Left ventricle myocardium inferior (tissue), 1 donor: ENCODE measurements at regions of chr19 and their contacts with region 1.

Region 1: DNA sequence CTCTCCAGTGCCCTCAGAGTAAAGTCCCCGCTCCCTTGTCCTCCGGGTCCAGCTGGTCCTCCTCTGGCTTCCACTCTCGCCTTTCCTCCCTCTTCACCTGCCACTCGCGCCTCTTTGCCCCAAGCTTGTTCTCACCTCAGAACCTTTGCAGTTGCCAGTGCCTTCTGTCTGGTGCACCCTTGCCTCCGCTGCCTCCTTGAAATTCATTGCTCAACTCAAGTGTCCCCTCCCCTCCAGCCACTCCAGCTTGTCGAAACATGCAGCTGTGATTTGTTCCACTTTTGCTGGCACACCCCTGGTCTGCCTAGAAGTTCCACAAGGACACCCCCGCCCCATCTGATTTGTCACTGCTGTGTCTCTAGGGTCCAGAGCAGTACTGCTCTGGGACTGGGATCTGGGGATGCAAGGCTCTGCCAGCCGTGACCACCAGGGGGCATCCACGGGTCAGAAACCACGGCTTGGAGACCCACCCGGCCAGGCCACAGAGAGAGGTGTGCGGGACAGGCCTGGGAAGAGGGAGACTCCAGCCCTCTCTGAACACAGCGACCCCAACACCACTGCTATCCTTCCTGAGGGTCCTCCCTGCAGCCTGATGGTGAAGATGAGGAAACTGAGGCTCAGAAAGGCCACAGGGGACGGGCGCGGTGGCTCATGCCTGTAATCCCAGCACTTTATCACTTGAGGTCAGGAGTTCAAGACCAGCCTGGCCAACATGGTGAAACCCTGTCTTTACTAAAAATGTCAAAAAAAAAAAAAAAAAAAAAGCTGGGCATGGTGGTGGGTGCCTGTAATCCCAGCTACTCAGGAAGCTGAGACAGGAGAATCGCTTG is 49.9 kb downstream of the AP1M1 start:
- DNase-seq: peak; percentile 90
- H3K4me3 ChIP-seq: no peak overlapping the region
- H3K27ac ChIP-seq: peak overlapping the region; percentile 60
- H3K4me1 ChIP-seq: no peaks in the 10 kb centered on the region
- H3K27me3 ChIP-seq: no peaks in the 10 kb centered on the region
- CTCF ChIP-seq: peak; percentile 96

Region 2: DNA sequence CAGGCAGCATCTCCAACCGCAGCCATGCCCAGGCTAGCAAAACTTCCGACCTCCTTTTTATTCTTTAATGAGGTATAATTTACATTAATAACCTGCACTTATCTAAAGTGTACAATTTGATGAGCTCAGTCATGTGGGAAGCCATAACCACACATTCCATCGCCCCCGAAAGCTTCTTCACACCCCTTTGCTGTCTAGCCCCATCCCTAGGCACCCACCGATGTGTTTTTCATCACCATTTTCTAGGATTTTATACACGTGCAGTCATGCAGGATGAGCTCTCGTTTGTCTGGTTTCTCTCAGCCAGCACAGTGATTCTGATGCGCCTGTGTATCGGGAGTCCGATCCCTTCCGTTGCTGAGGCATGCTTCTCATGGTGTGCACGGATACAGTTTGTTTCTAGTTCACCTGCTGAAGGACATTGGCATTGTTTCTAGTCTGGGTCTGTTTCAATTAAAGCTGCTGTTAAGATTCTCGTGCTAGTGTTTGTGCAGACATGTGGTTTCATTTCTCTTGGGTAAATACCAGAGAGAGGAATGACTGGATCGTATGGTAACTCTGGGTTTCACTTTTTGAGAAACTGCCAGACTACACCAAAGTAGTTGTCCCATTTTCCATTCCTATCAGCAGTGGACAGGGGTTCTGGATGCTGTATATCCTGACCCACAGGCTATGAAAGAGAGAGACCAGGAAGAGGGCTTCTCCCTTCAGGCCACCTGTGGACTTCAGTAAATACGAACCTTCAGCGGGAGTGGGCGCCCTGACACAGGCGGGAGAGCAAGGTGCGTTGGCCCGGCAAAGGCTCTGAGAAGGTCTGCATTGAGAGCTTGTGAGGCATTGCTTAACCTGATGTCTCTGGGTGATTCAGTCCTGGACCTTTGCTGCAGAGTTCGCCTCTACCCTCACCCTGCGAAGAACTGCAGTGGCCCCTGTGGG is 45.0 kb before region 1 on chr19:
- intact Hi-C with region 1: no loop called
- DNase-seq: no peak
- H3K4me3 ChIP-seq: no peak overlapping the region
- H3K27ac ChIP-seq: no peak overlapping the region
- H3K4me1 ChIP-seq: peaks cover 57% of the 10 kb centered on the region
- H3K27me3 ChIP-seq: no peaks in the 10 kb centered on the region
- CTCF ChIP-seq: no peak

Region 3: DNA sequence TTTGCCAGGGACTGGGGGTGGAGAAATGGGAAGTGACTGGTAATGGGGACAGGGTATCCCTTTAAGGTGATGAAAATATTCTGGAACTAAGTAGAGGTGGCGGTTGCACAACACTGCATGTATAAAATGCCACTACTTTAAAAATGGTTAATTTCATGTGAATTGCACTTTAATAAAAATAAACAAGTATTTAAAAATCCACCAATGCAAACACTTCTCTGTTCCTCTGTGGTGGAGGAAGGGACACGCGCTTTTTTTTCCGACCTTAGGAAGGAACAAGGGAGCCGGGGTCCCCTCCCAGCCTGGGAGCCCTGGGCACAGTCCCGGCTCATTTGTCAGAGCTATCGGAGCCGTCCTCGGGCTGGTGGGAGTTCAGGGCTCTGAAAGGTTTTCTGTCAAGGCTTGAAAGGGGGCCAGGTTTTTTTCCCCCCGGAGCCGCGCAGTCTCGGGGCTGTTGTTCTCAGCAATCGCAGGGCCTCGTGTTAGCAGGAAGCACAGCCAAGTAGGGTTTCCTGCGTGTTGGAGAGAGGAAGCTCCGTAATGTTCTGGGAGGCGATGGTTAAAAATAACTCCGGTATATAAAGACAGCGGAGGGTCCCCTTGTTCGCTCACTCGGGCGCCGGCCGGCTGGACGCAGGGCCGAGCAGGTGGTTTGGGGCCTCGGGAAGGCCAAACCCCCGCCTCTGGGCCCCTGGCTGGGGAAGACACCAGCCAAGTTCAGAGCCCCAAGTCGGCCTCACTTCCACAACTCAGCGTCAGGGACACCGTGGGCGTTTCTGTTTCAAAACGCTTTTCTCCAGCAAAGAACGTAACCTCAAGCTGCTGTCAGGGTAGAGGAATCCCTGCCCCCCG is 35.9 kb after region 1 on chr19:
- intact Hi-C with region 1: no loop called
- DNase-seq: peak; percentile 84
- H3K4me3 ChIP-seq: peak overlapping the region; percentile 56
- H3K27ac ChIP-seq: peak overlapping the region; percentile 96
- H3K4me1 ChIP-seq: peaks cover 69% of the 10 kb centered on the region
- H3K27me3 ChIP-seq: no peaks in the 10 kb centered on the region
- CTCF ChIP-seq: no peak

Region 4: DNA sequence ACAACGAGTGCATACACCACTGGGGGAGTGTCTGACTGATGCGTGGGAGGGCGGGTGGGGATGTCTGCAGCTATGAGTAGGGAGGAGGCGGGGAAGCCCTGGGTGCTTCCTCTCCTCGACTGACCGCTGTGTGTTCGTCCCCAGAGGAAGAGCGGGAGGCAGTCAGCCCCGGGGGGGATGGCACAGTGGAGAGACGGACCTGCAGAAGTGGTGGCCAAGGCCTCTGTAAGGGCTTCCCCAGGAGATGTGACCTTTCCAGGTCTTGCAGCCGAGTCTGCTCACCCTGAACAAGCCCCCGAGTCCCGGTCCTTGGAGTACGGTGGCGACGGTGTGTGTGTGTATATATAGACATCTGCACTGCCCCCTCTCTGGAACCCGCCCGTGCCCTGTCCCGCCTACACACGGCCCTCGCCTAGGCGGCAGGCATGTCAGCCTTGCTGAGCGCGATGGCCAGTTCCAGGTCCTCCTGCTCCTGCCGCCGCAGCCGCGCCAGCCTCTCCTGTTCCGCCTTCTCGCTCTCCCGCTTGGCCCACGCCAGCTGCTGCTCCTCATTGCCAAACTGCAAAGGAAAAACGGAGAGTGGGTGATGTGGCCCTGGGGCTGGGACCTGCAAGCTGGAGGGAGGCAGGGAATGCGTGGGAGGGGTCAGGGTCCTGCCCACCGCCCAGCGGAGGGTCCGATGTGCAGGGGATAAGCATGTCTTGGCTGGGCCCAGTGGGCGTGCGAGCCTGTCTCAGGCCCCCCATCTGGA is 107.9 kb after region 1 on chr19:
- intact Hi-C with region 1: no loop called
- DNase-seq: peak; percentile 46
- H3K4me3 ChIP-seq: peak overlapping the region; percentile 51
- H3K27ac ChIP-seq: peak overlapping the region; percentile 65
- H3K4me1 ChIP-seq: peaks cover 50% of the 10 kb centered on the region
- H3K27me3 ChIP-seq: no peaks in the 10 kb centered on the region
- CTCF ChIP-seq: no peak

Region 5: DNA sequence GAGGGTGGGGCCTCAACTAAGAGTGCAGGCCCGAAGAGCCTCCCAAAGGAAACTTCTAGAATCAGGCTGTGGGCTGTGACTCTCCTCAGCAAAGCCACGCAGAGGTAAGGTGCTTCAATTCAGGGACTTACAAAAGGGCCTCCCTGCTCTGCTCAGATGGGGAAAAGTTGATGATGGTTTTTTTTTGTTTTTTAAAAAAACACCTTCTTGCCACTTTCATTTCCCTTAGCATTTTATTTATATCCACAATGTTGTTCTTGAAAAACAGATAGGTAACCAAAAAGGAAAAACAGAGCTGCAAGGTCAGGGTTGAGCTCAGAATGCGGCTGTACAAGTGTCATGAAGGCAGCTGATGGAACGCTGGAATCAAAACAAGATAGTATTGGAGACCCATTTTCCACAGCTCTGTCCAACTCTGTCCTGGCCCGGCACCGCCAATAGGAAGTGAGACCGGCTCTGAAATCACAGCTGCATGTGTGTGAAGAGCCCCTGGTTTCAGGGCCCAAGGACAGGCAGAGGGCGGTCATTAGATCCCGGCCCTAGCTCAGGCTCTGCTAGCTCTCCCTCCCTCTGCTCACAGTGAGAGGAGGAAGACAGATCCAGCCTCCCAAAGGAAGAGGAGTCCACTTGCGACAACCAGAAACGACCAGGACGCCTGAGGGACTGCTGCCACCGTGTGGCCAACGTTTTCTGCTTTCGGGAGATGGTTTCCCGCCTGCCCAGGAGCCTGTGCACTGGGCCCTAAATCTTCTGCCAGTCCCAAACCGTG is 135.4 kb after region 1 on chr19:
- intact Hi-C with region 1: loop called (anchors 2 kb)
- DNase-seq: peak; percentile 90
- H3K4me3 ChIP-seq: peak overlapping the region; percentile 26
- H3K27ac ChIP-seq: peak overlapping the region; percentile 91
- H3K4me1 ChIP-seq: peaks cover 65% of the 10 kb centered on the region
- H3K27me3 ChIP-seq: no peaks in the 10 kb centered on the region
- CTCF ChIP-seq: peak; percentile 90